ENCODE measurements at regions of chr4 and their contacts with region 1.

Region 1: GRCh38 chr4:80266253-80266901 is at the start of gene FGF5:
- DNase-seq: peak; percentile 66
- H3K4me3 Mint-ChIP-seq: peak within 1 kb of the TSS; percentile 92
- H3K27ac Mint-ChIP-seq: peak within 1 kb of the TSS; percentile 48
- H3K4me1 Mint-ChIP-seq: peaks cover 10% of the 10 kb centered on the region
- H3K27me3 Mint-ChIP-seq: no peaks in the 10 kb centered on the region
- CTCF ChIP-seq: no peak
- total RNA-seq, gene FGF5: not detected in 2 replicates

Region 2: GRCh38 chr4:80307774-80308465 is 41.5 kb after region 1 on chr4:
- CTCF ChIA-PET with region 1: interaction called, 3 read pairs
- POLR2A ChIA-PET with region 1: interaction called, 15 read pairs
- intact Hi-C with region 1: loop called (anchors 2 kb)
- DNase-seq: peak; percentile 78
- H3K4me3 Mint-ChIP-seq: peak overlapping the region; percentile 59
- H3K27ac Mint-ChIP-seq: peak overlapping the region; percentile 53
- H3K4me1 Mint-ChIP-seq: peaks cover 43% of the 10 kb centered on the region
- H3K27me3 Mint-ChIP-seq: no peaks in the 10 kb centered on the region
- CTCF ChIP-seq: no peak